Activated naive CD4-positive, alpha-beta T cell treated with anti-CD3 and anti-CD28 coated beads, Interleukin-2, amount 10 ng/mL, durations not matched to agents 7 days and 5 days (primary cell): ENCODE measurements at regions of chr5 and their contacts with region 1.

Region 1: GRCh38 chr5:59660737-59661136 is 232.8 kb downstream of the PDE4D start:
- DNase-seq: no peak
- H3K4me3 Mint-ChIP-seq: no peak overlapping the region
- H3K27ac Mint-ChIP-seq: no peak overlapping the region
- H3K4me1 Mint-ChIP-seq: peaks cover 12% of the 10 kb centered on the region
- H3K27me3 Mint-ChIP-seq: no peaks in the 10 kb centered on the region

Region 2: GRCh38 chr5:59506285-59506877 is 154.4 kb before region 1 on chr5:
- CTCF ChIA-PET with region 1: interaction called, 15 read pairs
- DNase-seq: no peak
- H3K4me3 Mint-ChIP-seq: no peak overlapping the region
- H3K27ac Mint-ChIP-seq: no peak overlapping the region
- H3K4me1 Mint-ChIP-seq: no peaks in the 10 kb centered on the region
- H3K27me3 Mint-ChIP-seq: no peaks in the 10 kb centered on the region